Vagina (tissue), 2 donors: ENCODE measurements at regions of chr12 and their contacts with region 1.

Region 1: DNA sequence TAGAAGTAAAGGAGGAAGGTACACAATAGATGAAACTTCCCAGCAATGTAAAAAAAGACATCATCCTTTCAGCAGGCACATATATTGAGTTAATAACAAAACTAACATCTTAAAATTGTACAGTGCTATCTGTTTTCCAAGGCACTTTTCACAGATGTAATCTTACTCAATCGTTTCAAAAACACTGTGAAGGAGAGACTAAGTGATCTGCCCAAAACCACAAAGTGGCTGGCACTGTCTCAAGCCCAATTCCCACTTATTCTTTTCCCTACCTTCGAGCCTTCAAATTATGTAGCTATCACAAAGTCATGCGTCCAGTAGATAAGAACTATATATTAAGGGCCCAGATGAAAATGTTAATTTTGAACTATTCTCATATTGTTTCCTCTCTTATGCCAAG is 193.6 kb upstream of the RASSF8 start:
- DNase-seq: no peak
- H3K4me3 ChIP-seq: no peak overlapping the region
- H3K27ac ChIP-seq: no peak overlapping the region
- H3K4me1 ChIP-seq: no peaks in the 10 kb centered on the region
- H3K27me3 ChIP-seq: no peaks in the 10 kb centered on the region
- CTCF ChIP-seq: no peak
- POLR2A ChIP-seq: no peak

Region 2: GRCh38 chr12:24012528-24012927 is 1752.4 kb before region 1 on chr12:
- intact Hi-C with region 1: loop called (anchors 5 kb)
- DNase-seq: no peak
- H3K4me3 ChIP-seq: no peak overlapping the region
- H3K27ac ChIP-seq: no peak overlapping the region
- H3K4me1 ChIP-seq: no peaks in the 10 kb centered on the region
- H3K27me3 ChIP-seq: no peaks in the 10 kb centered on the region
- CTCF ChIP-seq: no peak
- POLR2A ChIP-seq: no peak

Region 3: DNA sequence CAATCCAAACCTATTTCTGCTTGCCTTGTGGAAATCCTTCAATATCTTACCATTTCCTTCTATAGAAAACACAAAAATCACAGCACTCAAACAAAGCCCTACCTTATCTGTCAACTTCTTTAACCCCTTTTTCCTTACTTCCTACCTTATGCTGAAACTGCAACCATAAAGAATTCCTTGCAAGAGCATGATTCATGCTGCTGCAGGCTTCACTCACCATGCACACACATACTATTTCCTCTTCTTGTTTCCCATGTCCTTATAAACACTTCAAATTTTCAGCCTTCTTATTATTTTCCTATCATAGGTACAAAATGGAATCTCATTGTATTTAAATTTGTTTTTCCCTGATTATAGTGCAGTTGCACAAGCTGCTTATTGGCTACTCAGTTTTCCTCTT is 235.2 kb before region 1 on chr12:
- intact Hi-C with region 1: no loop called
- DNase-seq: no peak
- H3K4me3 ChIP-seq: no peak overlapping the region
- H3K27ac ChIP-seq: no peak overlapping the region
- H3K4me1 ChIP-seq: no peaks in the 10 kb centered on the region
- H3K27me3 ChIP-seq: no peaks in the 10 kb centered on the region
- CTCF ChIP-seq: no peak
- POLR2A ChIP-seq: no peak

Region 4: GRCh38 chr12:25713264-25713663 is 51.6 kb before region 1 on chr12:
- intact Hi-C with region 1: no loop called
- DNase-seq: no peak
- H3K4me3 ChIP-seq: no peak overlapping the region
- H3K27ac ChIP-seq: no peak overlapping the region
- H3K4me1 ChIP-seq: no peaks in the 10 kb centered on the region
- H3K27me3 ChIP-seq: no peaks in the 10 kb centered on the region
- CTCF ChIP-seq: no peak
- POLR2A ChIP-seq: no peak